AG04449 (cell line): ENCODE measurements at regions of chr10 and their contacts with region 1.

Region 1: DNA sequence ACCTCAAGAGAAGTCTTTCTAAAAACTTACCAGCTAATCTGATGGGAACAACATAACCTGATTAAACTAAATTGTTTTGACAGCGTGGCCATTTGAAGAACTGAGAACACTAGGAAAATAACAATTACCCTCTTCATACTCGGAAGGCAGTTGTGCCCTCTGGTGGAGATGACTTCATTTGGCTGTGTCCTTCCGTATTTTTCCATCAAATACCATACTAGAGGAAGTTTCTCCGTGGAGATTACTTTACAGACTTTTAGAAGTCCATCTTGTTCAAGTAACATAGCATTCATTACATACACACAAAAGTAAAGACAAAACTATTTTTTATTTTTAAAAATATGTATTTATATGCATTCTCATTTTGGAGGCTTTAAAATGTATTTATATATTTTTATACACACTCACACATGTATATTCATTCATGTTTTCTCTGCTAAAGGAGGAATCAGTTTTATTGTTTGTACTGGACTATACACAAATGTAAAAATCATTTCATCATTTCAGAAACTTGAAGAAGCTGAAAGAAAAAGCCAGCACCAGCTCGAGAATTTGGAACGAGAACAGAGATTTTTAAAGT is 25.2 kb downstream of the SMNDC1 start:
- DNase-seq: no peak
- H3K4me3 ChIP-seq: no peak overlapping the region
- CTCF ChIP-seq: peak; percentile 73

Region 2: GRCh38 chr10:109914966-109915365 is 364.5 kb before region 1 on chr10:
- CTCF ChIA-PET with region 1: no interaction called
- POLR2A ChIA-PET with region 1: no interaction called
- DNase-seq: peak; percentile 70
- H3K4me3 ChIP-seq: no peak overlapping the region
- CTCF ChIP-seq: no peak

Region 3: GRCh38 chr10:110210674-110211464 is 68.6 kb before region 1 on chr10:
- CTCF ChIA-PET with region 1: interaction called, 30 read pairs
- POLR2A ChIA-PET with region 1: no interaction called
- DNase-seq: peak; percentile 92
- H3K4me3 ChIP-seq: peak overlapping the region; percentile 80
- CTCF ChIP-seq: no peak

Region 4: GRCh38 chr10:110229155-110229554 is 50.3 kb before region 1 on chr10:
- CTCF ChIA-PET with region 1: interaction called, 13 read pairs
- POLR2A ChIA-PET with region 1: no interaction called
- DNase-seq: no peak
- H3K4me3 ChIP-seq: no peak overlapping the region
- CTCF ChIP-seq: no peak

Region 5: DNA sequence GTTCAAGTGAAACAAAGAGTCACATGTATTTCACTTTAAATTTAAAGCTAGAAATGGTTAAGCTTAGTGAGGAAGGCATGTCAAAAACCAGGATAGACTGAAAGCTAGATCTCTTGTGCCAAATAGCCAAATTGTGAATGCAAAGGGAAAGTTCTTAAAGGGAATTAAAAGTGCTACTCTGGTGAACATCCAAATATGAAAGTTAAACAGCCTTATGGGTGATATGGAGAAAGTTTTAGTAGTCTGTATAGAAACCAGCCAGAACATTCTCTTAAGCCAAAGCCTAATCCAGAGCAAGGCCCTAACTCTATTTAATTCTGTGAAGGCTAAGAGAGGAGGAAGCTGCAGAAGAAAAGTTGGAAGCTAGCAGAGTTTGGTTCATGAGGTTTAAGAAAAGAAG is 25.0 kb before region 1 on chr10:
- CTCF ChIA-PET with region 1: interaction called, 11 read pairs
- POLR2A ChIA-PET with region 1: no interaction called
- DNase-seq: no peak
- H3K4me3 ChIP-seq: no peak overlapping the region
- CTCF ChIP-seq: no peak

Region 6: DNA sequence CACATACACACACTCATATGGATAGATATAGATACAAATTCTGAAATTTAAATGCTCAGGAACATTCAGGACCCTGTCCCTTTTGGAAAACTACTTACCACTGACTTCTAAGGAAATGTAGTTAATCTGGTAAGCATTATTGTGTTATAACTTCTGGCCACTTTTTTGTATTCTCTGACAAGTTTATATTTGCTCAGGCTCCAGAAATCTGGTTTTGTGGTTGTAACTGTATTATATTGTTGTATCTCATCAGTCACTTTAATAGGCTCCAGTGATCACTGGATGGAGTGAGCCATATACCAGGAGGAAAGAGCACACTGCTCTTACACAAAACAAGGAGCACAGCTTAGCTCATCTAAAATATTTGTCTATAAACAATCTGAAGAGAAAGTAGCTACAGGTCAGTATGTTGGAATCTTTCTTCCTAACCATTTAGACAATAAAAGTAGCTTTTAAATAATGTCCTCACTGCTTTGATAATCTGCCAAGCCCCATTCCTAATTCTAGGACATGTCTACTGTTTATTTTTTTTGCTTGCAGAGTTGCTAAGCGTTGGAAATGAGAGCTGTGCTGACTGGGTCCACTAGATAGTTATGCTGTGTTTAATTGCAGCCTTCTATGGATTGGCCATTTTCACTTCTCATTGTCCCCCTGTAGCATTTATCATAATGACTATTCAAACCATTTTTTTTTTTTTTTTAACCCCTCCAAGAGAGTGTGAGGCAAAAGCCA is 18.6 kb before region 1 on chr10:
- CTCF ChIA-PET with region 1: interaction called, 10 read pairs
- POLR2A ChIA-PET with region 1: no interaction called
- DNase-seq: no peak
- H3K4me3 ChIP-seq: no peak overlapping the region
- CTCF ChIP-seq: no peak

Region 7: DNA sequence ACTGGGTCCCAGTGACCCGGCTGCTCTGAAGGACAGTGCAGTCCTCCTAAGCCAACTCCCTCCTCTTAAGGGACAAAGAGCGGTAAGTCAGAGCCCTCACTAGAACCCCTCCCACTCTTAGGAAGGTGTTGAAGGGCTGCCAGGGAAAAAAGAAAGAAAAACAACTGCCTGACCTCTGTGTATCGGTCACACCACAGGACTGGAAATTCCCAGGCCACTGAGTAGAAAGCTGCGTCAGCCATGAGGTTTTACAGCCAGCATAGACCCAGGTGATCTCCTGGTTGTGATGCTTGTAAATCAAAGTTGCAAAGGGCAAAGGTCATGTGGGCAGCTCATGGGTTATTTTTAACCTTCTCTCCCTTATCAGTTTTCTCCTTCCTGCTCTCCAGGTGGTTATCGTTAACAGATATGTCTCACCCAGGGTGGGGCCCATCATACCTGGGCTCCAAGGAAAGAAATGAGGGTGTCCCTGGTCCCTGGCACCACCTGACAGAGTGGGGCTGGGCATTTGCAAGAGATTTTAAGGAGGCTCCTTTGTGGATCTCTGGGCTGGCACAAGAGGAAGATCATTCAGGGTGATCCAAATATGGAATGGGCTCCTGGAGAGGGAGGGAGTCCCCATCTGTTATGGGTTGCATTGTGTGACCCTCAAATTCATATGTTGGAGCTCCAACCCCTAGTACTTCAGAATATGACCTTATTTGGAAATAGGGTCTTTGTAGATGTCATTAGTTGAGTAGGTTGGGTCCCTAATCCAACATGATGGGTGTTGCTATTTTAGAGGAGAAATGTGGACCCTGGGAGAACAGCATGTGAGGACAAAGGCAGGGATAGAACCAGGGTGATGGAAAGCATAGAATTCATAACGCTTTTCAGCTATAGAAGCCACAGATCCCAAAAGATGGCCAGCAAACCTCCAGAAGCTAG is 116.5 kb after region 1 on chr10:
- CTCF ChIA-PET with region 1: no interaction called
- POLR2A ChIA-PET with region 1: no interaction called
- DNase-seq: peak; percentile 77
- H3K4me3 ChIP-seq: no peak overlapping the region
- CTCF ChIP-seq: no peak